ENCODE measurements at regions of chr1 and their contacts with region 1.

Region 1: GRCh38 chr1:201895913-201896807 is 7.5 kb downstream of the SHISA4 start:
- DNase-seq: peak; percentile 94
- ATAC-seq: peak; percentile 96
- H3K4me3 Mint-ChIP-seq: peak overlapping the region; percentile 41
- H3K27ac Mint-ChIP-seq: peak overlapping the region; percentile 56
- H3K4me1 Mint-ChIP-seq: peaks cover 5% of the 10 kb centered on the region
- H3K27me3 Mint-ChIP-seq: peaks cover 11% of the 10 kb centered on the region

Region 2: GRCh38 chr1:201396861-201397464 is 499.2 kb before region 1 on chr1:
- CTCF ChIA-PET with region 1: no interaction called
- POLR2A ChIA-PET with region 1: no interaction called
- intact Hi-C with region 1: no loop called
- DNase-seq: no peak
- ATAC-seq: no peak
- H3K4me3 Mint-ChIP-seq: no peak overlapping the region
- H3K27ac Mint-ChIP-seq: no peak overlapping the region
- H3K4me1 Mint-ChIP-seq: no peaks in the 10 kb centered on the region
- H3K27me3 Mint-ChIP-seq: peaks cover 35% of the 10 kb centered on the region

Region 3: DNA sequence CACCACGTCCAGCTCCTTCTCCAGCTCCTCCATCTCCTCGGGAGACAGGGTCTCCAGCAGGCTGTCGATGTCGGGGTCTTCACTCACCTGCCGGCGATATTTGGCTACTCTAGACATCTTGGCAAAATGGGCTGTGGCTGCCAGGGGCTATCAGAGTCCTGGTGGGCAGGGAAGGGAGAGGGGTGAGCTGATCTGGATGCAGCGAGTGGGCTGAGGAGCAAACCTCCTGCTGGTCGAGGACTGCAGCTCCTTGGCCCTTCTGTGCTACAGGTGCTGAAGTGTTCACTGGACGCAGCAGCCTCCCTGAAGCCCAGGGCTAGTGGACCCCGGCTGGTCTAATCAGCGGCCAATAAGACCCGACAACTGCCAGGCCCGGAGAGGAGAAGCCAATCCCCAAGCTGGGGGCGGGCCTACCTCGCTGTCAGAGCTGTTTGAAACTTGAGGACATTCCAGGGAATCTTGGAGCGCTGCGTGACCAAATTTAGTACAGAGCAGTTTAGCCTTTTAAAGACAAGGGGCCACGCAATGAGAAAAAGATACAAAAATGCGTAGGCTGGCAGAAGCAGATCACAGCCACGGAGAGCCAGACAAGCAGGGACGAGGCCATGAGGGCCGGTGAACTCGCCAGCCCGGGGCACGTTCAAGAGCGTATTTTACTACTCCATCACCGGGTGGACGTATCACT is 50.2 kb after region 1 on chr1 and contains the start of gene LMOD1:
- CTCF ChIA-PET with region 1: interaction called, 10 read pairs
- POLR2A ChIA-PET with region 1: no interaction called
- intact Hi-C with region 1: no loop called
- DNase-seq: peak; percentile 19
- ATAC-seq: no peak
- H3K4me3 Mint-ChIP-seq: no peak within 1 kb of the TSS
- H3K27ac Mint-ChIP-seq: no peak within 1 kb of the TSS
- H3K4me1 Mint-ChIP-seq: peaks cover 6% of the 10 kb centered on the region
- H3K27me3 Mint-ChIP-seq: peaks cover 47% of the 10 kb centered on the region
- total RNA-seq, gene LMOD1: not detected

Region 4: GRCh38 chr1:201964261-201964660 is 68.1 kb after region 1 on chr1:
- CTCF ChIA-PET with region 1: interaction called, 11 read pairs
- POLR2A ChIA-PET with region 1: no interaction called
- intact Hi-C with region 1: loop called in 1 of 2 experiments (anchors 5 kb)
- DNase-seq: no peak
- ATAC-seq: no peak
- H3K4me3 Mint-ChIP-seq: no peak overlapping the region
- H3K27ac Mint-ChIP-seq: no peak overlapping the region
- H3K4me1 Mint-ChIP-seq: no peaks in the 10 kb centered on the region
- H3K27me3 Mint-ChIP-seq: no peaks in the 10 kb centered on the region

Region 5: GRCh38 chr1:201982623-201983379 is 86.6 kb after region 1 on chr1 and contains the start of gene RNPEP:
- CTCF ChIA-PET with region 1: interaction called, 19 read pairs
- POLR2A ChIA-PET with region 1: interaction called, 8 read pairs
- intact Hi-C with region 1: loop called in 1 of 2 experiments (anchors 2 kb)
- DNase-seq: peak; percentile 69
- ATAC-seq: peak; percentile 82
- H3K4me3 Mint-ChIP-seq: peak within 1 kb of the TSS; percentile 86
- H3K27ac Mint-ChIP-seq: peak within 1 kb of the TSS; percentile 80
- H3K4me1 Mint-ChIP-seq: peaks cover 16% of the 10 kb centered on the region
- H3K27me3 Mint-ChIP-seq: no peaks in the 10 kb centered on the region
- total RNA-seq, gene RNPEP: 44.9 to 49.2 TPM

Region 6: DNA sequence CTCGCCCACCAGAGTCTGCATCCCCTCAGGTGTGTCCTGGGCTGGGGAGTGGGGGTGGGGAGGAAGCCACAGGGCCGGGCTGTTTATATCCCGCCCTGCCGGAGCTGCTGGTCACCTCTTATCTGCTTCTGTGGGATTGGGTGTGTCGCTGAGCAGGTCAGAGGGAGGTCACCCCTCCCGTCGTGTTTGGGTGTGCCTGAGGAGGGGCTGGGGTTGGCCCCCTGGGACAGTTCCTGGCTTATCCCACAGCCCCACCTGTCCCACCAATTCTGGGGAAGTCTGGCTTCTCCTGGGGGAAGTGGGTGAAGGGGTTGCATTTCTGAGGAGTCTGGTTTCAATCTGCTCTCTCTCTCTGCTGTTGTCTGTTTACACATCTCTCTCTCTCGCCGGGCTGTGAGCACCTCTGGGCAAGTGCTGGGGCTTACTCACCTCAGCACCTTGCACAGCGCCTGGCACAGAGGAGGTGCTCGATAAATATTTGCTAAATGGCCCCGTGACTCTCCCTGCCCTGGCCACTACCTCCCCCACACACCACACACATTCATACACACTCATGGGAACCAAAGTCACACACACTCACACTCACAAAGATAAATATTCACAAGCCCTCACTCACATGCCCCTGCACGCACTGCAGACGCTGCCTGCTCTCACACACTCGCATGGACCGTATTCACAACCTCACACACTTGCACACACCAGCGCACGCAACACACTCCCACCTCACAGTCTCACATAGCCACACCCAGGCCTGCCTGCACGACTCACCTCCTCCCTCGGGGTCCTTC is 122.5 kb after region 1 on chr1:
- CTCF ChIA-PET with region 1: no interaction called
- POLR2A ChIA-PET with region 1: no interaction called
- intact Hi-C with region 1: no loop called
- DNase-seq: no peak
- ATAC-seq: no peak
- H3K4me3 Mint-ChIP-seq: no peak overlapping the region
- H3K27ac Mint-ChIP-seq: no peak overlapping the region
- H3K4me1 Mint-ChIP-seq: no peaks in the 10 kb centered on the region
- H3K27me3 Mint-ChIP-seq: peaks cover 3% of the 10 kb centered on the region

Region 7: GRCh38 chr1:202122639-202123335 is 226.6 kb after region 1 on chr1 and contains the start of gene GPR37L1:
- CTCF ChIA-PET with region 1: interaction called, 3 read pairs
- POLR2A ChIA-PET with region 1: no interaction called
- intact Hi-C with region 1: loop called in 1 of 2 experiments (anchors 1 kb)
- DNase-seq: no peak
- ATAC-seq: no peak
- H3K4me3 Mint-ChIP-seq: no peak within 1 kb of the TSS
- H3K27ac Mint-ChIP-seq: no peak within 1 kb of the TSS
- H3K4me1 Mint-ChIP-seq: no peaks in the 10 kb centered on the region
- H3K27me3 Mint-ChIP-seq: no peaks in the 10 kb centered on the region
- total RNA-seq, gene GPR37L1: not detected

Measured in activated CD4-positive, alpha-beta T cell treated with anti-CD3 and anti-CD28 coated beads for 36 hours (primary cell).